Right ventricle myocardium inferior (tissue), 1 donor: ENCODE measurements at regions of chr15 and their contacts with region 1.

Region 1: DNA sequence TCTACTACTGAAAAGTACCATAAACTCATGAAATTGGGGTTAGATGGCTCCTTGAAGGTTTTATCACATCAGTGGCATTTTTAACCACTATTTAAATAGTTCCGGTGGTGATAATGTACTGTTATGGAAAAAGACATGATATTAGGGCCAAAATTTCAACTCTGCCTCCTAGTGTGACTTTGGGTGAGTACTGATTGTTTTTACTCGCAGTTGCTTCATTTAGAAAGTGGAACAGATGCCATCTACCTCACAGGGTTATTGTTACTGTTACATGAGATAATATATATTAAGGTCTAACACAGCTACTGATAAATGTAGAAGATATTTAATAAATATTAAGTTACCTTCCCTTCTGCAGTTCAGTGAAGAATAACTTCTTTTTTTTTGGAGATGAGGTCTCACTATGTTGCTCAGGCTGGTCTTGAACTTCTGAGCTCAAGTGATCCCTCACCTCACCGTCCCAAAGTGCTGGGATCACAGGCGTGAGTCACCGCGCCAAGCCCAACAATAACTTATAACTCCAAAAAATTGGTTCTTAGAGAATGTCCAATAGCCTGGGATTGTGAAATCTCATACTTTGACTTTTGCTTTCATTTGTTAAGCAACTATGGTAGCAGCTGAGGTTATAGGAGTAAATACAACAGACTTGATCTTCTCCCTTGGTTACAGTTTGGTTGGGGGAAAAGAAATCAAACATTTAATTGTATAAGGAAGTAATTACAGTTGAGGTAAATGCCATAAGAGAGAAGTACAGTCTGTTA is 48.3 kb downstream of the MEF2A start:
- DNase-seq: no peak
- ATAC-seq: peak; percentile 7

Region 2: DNA sequence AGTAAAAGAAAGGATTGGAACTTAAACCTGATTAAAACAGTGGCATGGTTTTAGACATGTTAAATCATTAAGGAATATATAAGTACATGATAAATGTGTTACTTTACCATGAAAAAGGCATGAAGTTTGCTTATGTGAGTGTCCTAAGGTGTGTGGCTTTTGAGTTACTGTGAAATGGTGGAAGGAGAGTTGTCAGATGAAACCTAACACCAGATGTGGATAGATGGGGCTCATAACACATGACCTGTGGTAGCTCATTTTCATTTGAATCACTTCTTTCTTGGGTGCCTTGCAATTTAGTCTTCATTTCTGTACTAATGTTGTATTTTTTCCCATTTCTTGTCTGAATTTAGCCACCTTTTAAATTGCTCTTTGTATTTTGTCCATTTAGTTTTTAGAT is 35.3 kb before region 1 on chr15:
- intact Hi-C with region 1: loop called (anchors 5 kb)
- DNase-seq: no peak
- ATAC-seq: no peak